ENCODE measurements at regions of chr17 and their contacts with region 1.

Region 1: GRCh38 chr17:38444151-38444550 is 15.9 kb downstream of the ARHGAP23 start:
- DNase-seq: peak; percentile 82
- ATAC-seq: peak; percentile 70 to 75

Region 2: GRCh38 chr17:38404174-38404943 is 39.8 kb before region 1 on chr17:
- intact Hi-C with region 1: no loop called
- DNase-seq: no peak
- ATAC-seq: no peak

Region 3: DNA sequence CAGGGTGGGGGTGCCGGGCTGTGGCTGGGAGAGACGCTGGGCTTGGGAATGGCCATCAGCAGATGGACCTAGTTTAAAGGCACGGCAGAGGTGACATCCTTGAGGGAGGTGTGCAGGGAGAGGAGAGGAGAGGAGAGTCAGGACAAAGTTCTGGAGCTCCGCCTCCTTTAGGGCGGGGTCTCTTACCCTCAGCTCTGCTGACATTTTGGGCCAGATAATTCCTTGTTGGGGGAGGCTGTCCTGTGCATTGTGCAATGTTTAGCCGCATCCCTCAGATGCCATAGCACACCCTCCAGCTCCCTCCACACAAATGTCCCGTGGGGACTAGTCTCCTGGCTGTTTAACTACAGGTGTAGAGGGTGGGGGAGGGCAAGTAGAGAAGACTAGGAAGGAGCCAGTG is 32.4 kb after region 1 on chr17:
- intact Hi-C with region 1: loop called in 1 of 2 experiments (anchors 5 kb)
- DNase-seq: no peak
- ATAC-seq: no peak

Region 4: GRCh38 chr17:38509008-38509771 is 65.0 kb after region 1 on chr17:
- intact Hi-C with region 1: no loop called
- DNase-seq: peak; percentile 86
- ATAC-seq: peak; percentile 63 to 85